ENCODE measurements at regions of chr4 and their contacts with region 1.

Region 1: GRCh38 chr4:185597532-185598188 is 62.4 kb upstream of the PDLIM3 start:
- DNase-seq: peak in 9 of 10 donors; percentile 59 to 86 (median 76)
- H3K4me3 ChIP-seq: peak overlapping the region in 30 of 59 donors; percentile 0 to 57 (median 24)
- H3K27ac ChIP-seq: peak overlapping the region in 20 of 59 donors; percentile 2 to 66 (median 23)
- H3K27me3 ChIP-seq: no peaks in the 10 kb centered on the region
- CTCF ChIP-seq: peak; percentile 93 to 100 (median 99)

Region 2: DNA sequence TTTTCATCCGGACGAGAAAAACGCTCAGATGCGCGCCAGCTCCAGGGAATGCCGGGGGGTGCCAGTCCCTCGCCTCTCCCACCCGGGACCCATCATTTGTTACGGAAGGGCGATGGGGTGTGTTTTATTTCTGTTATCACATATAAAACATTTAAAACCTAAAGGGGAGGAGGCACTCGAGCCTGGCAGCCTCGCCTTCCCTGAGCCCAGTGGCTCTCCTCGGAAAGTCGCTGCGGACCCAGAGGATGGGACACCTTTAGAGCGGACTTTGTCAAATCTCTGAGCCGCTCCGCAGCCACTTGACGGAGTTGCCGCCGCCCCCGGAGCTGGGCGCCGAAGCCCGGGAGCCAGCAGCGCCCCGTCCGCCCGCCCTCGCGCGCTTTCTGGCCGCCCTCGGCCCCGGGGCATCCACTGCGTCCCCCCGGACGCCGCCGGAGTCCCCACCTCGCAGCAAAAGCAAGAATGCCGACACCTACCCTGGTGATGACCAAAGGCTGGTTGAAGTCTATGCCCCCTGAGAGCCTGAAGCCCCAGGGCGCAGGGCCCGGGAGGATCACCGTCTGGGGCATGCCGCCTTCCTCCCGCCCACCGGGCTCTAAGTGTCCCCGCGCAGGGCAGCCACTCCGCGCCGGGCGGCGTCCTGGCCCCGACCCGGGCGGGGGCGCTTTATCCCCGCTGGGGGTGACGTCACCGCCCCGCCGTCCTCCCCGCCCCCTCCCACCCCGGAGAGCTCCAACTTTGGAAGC is 62.6 kb before region 1 on chr4 and contains the start of gene PDLIM3:
- intact Hi-C with region 1: loop called in 1 of 2 experiments (anchors 5 kb)
- DNase-seq: peak in 7 of 10 donors; percentile 12 to 75 (median 54)
- H3K4me3 ChIP-seq: peak within 1 kb of the TSS; percentile 49 to 88 (median 75)
- H3K27ac ChIP-seq: peak within 1 kb of the TSS in 42 of 59 donors; percentile 1 to 83 (median 60)
- H3K27me3 ChIP-seq: peaks cover 0 to 30% (median 5%) of the 10 kb centered on the region in 45 donors
- CTCF ChIP-seq: peak in 14 of 56 donors; percentile 6 to 47 (median 19)
- total RNA-seq, gene PDLIM3: 6.9 to 29.7 (median 13.2) TPM

Region 3: GRCh38 chr4:185682236-185682635 is 84.6 kb after region 1 on chr4:
- intact Hi-C with region 1: no loop called
- DNase-seq: no peak
- H3K4me3 ChIP-seq: no peak overlapping the region
- H3K27ac ChIP-seq: no peak overlapping the region
- H3K27me3 ChIP-seq: no peaks in the 10 kb centered on the region
- CTCF ChIP-seq: no peak

Region 4: DNA sequence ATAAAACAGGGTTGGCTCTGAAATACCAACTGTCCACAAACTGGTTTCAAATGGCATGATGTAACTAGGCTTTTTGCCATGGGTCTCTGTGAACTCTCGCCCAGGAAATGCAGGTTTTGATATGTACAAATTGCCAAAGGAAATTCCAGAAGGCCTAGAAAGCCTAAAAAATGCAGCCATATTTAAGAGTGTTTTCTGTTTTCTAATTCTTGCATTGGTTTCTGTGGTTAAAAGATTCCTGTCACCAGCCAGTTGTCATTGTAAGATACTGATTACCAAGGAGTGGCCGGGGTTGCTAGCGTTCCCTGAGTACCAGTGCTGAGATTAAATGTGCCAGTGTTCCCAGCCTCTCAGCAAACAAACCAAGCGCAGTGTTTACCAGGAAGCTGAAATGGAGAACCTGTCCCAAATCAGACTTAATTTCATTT is 268.3 kb after region 1 on chr4:
- intact Hi-C with region 1: no loop called
- DNase-seq: no peak
- H3K4me3 ChIP-seq: no peak overlapping the region
- H3K27ac ChIP-seq: no peak overlapping the region
- H3K27me3 ChIP-seq: no peaks in the 10 kb centered on the region
- CTCF ChIP-seq: no peak